Heart right ventricle (tissue), 16 donors: ENCODE measurements at regions of chr9 and their contacts with region 1.

Region 1: DNA sequence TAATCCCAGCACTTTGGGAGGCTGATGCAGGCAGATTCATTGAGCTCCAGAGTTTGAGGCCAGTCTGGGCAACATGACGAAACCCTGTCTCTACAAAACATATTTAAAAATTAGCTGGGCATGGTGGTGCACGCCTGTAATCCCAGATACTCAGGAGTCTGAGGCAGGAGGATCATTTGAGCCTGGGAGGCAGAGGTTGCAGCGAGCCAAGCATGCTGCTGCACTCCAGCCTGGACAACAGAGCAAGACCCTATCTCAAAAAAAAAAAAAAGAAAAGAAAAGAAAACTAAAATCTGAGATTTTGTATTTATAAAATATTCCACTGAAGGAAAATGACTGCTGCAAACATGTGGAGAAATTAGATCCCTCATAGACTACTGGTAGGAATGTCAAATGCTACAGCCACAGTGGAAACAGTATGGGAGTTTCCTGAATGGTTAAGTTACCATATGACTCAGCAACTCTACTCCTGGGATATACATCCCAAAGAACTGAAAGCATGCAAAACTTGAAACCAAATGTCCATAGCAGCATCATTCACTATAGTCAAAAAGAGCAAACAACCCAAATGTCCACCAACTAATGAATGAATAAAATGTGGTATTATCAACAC is 106.1 kb downstream of the UBAP2 start:
- DNase-seq: no peak
- ATAC-seq: no peak
- H3K4me3 ChIP-seq: no peak overlapping the region
- H3K27ac ChIP-seq: peak overlapping the region in 2 of 10 donors; percentile 12 to 29
- H3K4me1 ChIP-seq: peaks cover 0 to 18% (median 4%) of the 10 kb centered on the region in 9 donors
- H3K27me3 ChIP-seq: no peaks in the 10 kb centered on the region
- CTCF ChIP-seq: no peak

Region 2: GRCh38 chr9:33884856-33885701 is 57.5 kb before region 1 on chr9:
- intact Hi-C with region 1: loop called in 1 of 10 experiments (anchors 10 kb)
- DNase-seq: peak in 1 of 2 donors; percentile 66
- ATAC-seq: peak in 6 of 8 donors; percentile 20 to 52 (median 36)
- H3K4me3 ChIP-seq: no peak overlapping the region
- H3K27ac ChIP-seq: peak overlapping the region in 5 of 10 donors; percentile 5 to 33 (median 21)
- H3K4me1 ChIP-seq: peaks cover 11 to 58% (median 41%) of the 10 kb centered on the region in 9 donors
- H3K27me3 ChIP-seq: no peaks in the 10 kb centered on the region
- CTCF ChIP-seq: no peak

Region 3: GRCh38 chr9:33988219-33988890 is 45.8 kb after region 1 on chr9:
- intact Hi-C with region 1: loop called in 1 of 10 experiments (anchors 5 kb)
- DNase-seq: no peak
- ATAC-seq: no peak
- H3K4me3 ChIP-seq: no peak overlapping the region
- H3K27ac ChIP-seq: no peak overlapping the region
- H3K4me1 ChIP-seq: no peaks in the 10 kb centered on the region
- H3K27me3 ChIP-seq: no peaks in the 10 kb centered on the region
- CTCF ChIP-seq: no peak